Activated naive CD4-positive, alpha-beta T cell treated with anti-CD3 and anti-CD28 coated beads for 36 hours (primary cell): ENCODE measurements at regions of chr18 and their contacts with region 1.

Region 1: DNA sequence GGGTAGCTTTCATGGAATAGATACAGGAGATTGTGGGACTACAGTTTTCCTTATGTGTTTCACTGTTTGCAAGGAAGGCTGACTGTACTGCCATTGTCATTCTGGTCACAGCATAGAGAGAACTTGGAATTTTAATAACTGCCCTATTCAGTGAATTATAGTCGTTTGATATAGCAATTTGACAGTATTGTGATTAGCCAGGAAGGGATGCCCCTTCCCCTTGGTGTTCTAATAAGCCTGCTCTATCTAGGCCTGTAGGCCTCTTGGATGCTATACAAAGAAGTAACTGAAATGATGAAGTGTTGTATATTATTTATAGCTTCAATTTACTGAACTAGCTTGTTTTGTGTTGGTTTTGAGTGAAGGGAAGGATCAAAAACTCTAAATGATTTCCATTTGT is 528.6 kb upstream of the CDH2 start:
- DNase-seq: no peak
- H3K4me3 Mint-ChIP-seq: no peak overlapping the region
- H3K27ac Mint-ChIP-seq: no peak overlapping the region
- H3K4me1 Mint-ChIP-seq: no peaks in the 10 kb centered on the region
- H3K27me3 Mint-ChIP-seq: no peaks in the 10 kb centered on the region

Region 2: DNA sequence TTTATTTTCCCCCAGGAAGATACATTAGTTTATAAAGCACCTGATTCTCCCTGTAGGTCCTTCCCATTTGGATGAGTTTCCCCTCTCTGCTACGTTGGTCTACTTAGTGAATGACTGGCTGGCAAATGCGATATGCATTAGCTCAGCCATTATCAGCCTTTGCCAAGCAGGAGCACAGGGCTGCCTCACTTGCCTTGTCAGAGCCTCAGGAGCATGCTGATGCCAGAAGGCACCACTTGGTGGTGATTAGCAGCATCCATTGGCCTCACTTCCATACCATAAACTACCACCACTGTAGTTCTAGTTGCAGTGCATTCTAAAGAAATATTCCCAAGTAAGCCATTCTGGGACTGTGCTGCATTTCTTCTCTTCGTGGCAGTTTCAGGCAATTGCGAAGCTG is 1077.6 kb before region 1 on chr18:
- CTCF ChIA-PET with region 1: no interaction called
- intact Hi-C with region 1: no loop called
- DNase-seq: no peak
- H3K4me3 Mint-ChIP-seq: no peak overlapping the region
- H3K27ac Mint-ChIP-seq: no peak overlapping the region
- H3K4me1 Mint-ChIP-seq: no peaks in the 10 kb centered on the region
- H3K27me3 Mint-ChIP-seq: no peaks in the 10 kb centered on the region

Region 3: DNA sequence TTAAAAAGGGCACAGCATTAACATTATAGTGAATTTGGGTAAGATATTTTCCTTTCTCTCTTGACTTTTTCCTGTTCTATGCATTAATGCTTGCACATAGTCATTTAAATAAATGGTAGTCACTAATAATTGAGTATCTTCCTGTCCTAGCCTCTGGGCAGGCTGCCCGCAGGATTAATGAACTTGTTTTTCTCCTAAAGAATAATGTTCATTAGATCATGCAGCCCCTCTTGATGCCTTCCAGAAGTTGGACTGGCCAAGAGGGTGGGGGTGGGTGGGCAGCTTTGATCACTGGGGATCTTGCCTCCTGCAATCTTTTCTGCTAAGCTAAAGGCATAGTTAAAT is 14.0 kb before region 1 on chr18:
- CTCF ChIA-PET with region 1: no interaction called
- intact Hi-C with region 1: loop called (anchors 1 kb)
- DNase-seq: no peak
- H3K4me3 Mint-ChIP-seq: no peak overlapping the region
- H3K27ac Mint-ChIP-seq: no peak overlapping the region
- H3K4me1 Mint-ChIP-seq: no peaks in the 10 kb centered on the region
- H3K27me3 Mint-ChIP-seq: no peaks in the 10 kb centered on the region